Ascending aorta (tissue), 2 donors: ENCODE measurements at regions of chr6 and their contacts with region 1.

Region 1: GRCh38 chr6:142885182-142885867 is 59.7 kb downstream of the HIVEP2 start:
- DNase-seq: peak in 1 of 2 donors; percentile 80
- H3K4me3 ChIP-seq: peak overlapping the region; percentile 48 to 60
- H3K27ac ChIP-seq: peak overlapping the region; percentile 52 to 60
- H3K4me1 ChIP-seq: peaks cover 0 to 15% of the 10 kb centered on the region in 2 donors
- H3K27me3 ChIP-seq: no peaks in the 10 kb centered on the region
- CTCF ChIP-seq: no peak

Region 2: DNA sequence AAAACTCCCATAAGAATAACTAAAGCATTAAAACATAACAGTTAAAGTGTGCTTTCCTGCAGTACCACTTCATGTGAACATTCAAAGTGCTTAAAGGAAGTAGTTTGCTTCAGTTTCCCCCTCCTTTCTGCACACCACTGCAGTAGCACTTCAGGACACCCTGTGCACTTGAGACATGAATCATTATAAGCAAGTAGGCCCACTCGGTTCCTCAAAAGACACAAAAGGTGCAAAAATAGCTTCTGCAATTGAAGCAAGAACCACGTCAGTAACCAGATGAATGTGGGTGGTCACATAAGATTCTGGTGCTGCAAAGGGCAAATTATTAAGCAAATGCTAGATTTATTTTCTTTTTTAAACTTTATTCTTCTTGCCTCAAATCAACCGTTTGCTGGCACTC is 101.0 kb before region 1 on chr6:
- intact Hi-C with region 1: loop called (anchors 5 kb)
- DNase-seq: no peak
- H3K4me3 ChIP-seq: no peak overlapping the region
- H3K27ac ChIP-seq: no peak overlapping the region
- H3K4me1 ChIP-seq: peaks cover 0 to 6% of the 10 kb centered on the region in 2 donors
- H3K27me3 ChIP-seq: no peaks in the 10 kb centered on the region
- CTCF ChIP-seq: no peak

Region 3: GRCh38 chr6:142833054-142833453 is 52.3 kb before region 1 on chr6:
- intact Hi-C with region 1: loop called (anchors 5 kb)
- DNase-seq: peak in 1 of 2 donors; percentile 72
- H3K4me3 ChIP-seq: peak overlapping the region in 1 of 2 donors; percentile 6
- H3K27ac ChIP-seq: peak overlapping the region in 1 of 2 donors; percentile 55
- H3K4me1 ChIP-seq: peaks cover 0 to 25% of the 10 kb centered on the region in 2 donors
- H3K27me3 ChIP-seq: no peaks in the 10 kb centered on the region
- CTCF ChIP-seq: no peak

Region 4: GRCh38 chr6:142845624-142846458 is 39.5 kb before region 1 on chr6:
- intact Hi-C with region 1: loop called (anchors 2 kb)
- DNase-seq: peak; percentile 43 to 87
- H3K4me3 ChIP-seq: peak overlapping the region; percentile 44 to 53
- H3K27ac ChIP-seq: peak overlapping the region; percentile 72 to 75
- H3K4me1 ChIP-seq: peaks cover 12 to 68% of the 10 kb centered on the region in 2 donors
- H3K27me3 ChIP-seq: no peaks in the 10 kb centered on the region
- CTCF ChIP-seq: no peak

Region 5: GRCh38 chr6:142926494-142927270 is 41.4 kb after region 1 on chr6:
- intact Hi-C with region 1: loop called (anchors 5 kb)
- DNase-seq: peak in 1 of 2 donors; percentile 88
- H3K4me3 ChIP-seq: peak overlapping the region; percentile 75 to 78
- H3K27ac ChIP-seq: peak overlapping the region; percentile 81 to 88
- H3K4me1 ChIP-seq: peaks cover 0 to 13% of the 10 kb centered on the region in 2 donors
- H3K27me3 ChIP-seq: no peaks in the 10 kb centered on the region
- CTCF ChIP-seq: no peak

Region 6: DNA sequence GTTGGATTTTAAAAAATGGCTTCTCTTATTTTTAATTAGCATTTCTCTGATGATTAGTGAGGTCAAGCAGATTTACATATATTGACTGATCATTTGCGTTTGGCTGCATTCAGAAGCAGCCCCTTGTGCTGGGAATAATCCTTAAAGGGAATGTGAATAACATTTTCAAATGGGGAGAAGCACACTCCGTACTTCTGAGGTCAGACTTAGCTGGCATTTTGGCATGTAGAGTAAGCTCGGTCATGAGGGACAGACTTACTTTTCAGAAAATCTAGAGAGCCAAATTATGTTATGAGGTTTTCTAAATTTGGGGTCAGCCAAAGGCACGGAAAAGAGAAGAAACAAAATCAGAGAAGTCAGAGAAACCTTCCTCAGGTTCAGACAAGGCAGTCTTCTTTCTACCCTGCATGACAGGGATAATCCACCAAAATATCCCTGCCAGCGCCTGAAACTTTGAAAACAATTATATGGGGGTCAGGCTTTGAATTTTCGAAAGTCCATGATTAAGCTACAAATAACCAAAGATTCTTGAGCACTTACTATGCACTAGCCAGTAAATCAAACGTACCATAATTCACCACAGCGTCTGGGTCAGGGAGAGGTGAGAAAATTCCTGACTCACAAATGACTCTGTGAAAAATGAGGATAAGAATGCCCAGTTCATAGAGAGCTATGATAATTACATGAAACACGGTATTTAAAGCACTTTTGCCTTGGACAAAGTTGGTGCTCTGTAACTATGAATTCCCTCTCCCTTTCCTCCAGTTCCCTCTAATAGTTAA is 520.2 kb after region 1 on chr6:
- intact Hi-C with region 1: loop called (anchors 5 kb)
- DNase-seq: no peak
- H3K4me3 ChIP-seq: peak overlapping the region in 1 of 2 donors; percentile 45
- H3K27ac ChIP-seq: peak overlapping the region; percentile 78 to 84
- H3K4me1 ChIP-seq: peaks cover 15 to 49% of the 10 kb centered on the region in 2 donors
- H3K27me3 ChIP-seq: no peaks in the 10 kb centered on the region
- CTCF ChIP-seq: no peak